Cardiac septum (tissue), 1 donor: ENCODE measurements at regions of chr14 and their contacts with region 1.

Region 1: DNA sequence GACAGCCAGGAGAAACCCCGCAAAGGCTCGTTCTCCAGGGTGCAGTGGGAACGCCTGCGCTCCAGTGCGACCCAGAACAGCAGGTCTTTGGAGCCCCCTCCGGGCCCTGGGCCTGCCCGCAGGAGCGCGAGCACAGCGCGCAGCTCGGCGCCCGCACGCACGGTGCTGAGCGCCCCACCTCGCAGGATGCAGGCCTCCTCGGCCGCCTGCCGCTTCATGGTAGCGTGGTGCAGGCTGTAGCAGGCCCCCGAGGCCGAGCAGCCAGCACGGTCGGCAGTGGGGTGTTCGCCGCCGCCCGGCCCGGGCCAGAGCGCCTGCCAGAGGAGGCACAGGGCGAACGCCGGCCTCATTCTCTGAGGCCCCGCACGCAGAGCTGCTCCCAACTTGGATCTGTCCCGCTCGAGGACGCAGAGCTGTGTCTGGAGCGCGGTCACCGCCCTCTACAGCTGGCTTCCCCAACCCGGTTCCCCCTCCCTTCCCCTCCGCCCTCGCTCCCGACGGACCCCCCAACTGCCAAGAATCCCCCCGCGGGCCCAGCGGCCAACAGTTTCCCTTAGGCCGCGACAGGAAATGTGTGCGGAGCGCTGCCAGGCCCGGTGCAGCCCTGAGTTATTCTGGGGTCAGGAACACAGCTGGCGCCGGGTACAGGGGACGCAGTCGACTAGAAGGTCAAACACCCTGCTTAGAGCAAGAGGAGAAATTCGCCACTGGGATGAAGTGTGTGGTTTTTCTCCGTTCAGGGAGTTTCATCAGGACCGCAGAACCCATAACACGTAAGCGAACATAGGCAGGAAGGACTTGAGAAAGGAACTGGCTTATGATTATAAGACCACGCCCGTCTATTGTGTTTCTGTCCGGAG is at the start of gene CLEC14A:
- DNase-seq: peak; percentile 89
- total RNA-seq, gene CLEC14A: 31.9 TPM

Region 2: GRCh38 chr14:38217553-38217952 is 38.4 kb before region 1 on chr14:
- intact Hi-C with region 1: no loop called
- DNase-seq: no peak

Region 3: GRCh38 chr14:38309522-38310277 is 53.8 kb after region 1 on chr14:
- intact Hi-C with region 1: loop called (anchors 2 kb)
- DNase-seq: no peak

Region 4: GRCh38 chr14:38366374-38366773 is 110.5 kb after region 1 on chr14:
- intact Hi-C with region 1: loop called (anchors 5 kb)
- DNase-seq: no peak